PC-3 (cell line): ENCODE measurements at regions of chr5 and their contacts with region 1.

Region 1: DNA sequence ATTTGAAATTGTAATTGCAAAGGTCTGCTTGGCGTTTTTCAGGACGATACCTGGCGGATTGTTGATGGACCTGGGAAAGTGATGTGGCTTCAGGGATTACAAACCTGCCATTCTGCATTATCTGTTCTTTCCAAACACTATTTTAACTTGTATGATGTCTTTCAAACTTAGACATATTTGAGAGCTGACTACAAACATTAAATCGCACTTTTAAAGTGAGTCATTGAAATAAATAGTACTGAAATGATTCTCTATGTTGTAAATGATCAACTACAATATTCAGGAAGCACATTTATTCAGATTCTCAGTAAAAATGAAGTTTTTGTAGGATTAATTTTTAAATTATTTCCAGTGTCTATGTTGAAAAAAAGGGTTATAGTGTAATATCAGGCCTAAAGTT is 32.3 kb upstream of the TMEM171 start:
- DNase-seq: peak; percentile 27
- ATAC-seq: peak; percentile 18; the same call in 1 of the 2 replicates
- H3K4me3 ChIP-seq: no peak overlapping the region
- H3K27ac ChIP-seq: no peak overlapping the region
- H3K4me1 ChIP-seq: peaks cover 12% of the 10 kb centered on the region; the same call in 1 of the 2 replicates
- H3K27me3 ChIP-seq: no peaks in the 10 kb centered on the region
- CTCF ChIP-seq: no peak

Region 2: GRCh38 chr5:72920690-72921502 is 167.1 kb before region 1 on chr5:
- CTCF ChIA-PET with region 1: no interaction called
- POLR2A ChIA-PET with region 1: no interaction called
- intact Hi-C with region 1: loop called (anchors 2 kb)
- DNase-seq: peak; percentile 68
- ATAC-seq: peak; percentile 85
- H3K4me3 ChIP-seq: no peak overlapping the region
- H3K27ac ChIP-seq: no peak overlapping the region
- H3K4me1 ChIP-seq: no peaks in the 10 kb centered on the region
- H3K27me3 ChIP-seq: no peaks in the 10 kb centered on the region
- CTCF ChIP-seq: peak; percentile 73

Region 3: GRCh38 chr5:73066466-73066865 is 21.6 kb before region 1 on chr5:
- CTCF ChIA-PET with region 1: no interaction called
- POLR2A ChIA-PET with region 1: no interaction called
- intact Hi-C with region 1: no loop called
- DNase-seq: no peak
- ATAC-seq: no peak
- H3K4me3 ChIP-seq: no peak overlapping the region
- H3K27ac ChIP-seq: no peak overlapping the region
- H3K4me1 ChIP-seq: no peaks in the 10 kb centered on the region
- H3K27me3 ChIP-seq: no peaks in the 10 kb centered on the region
- CTCF ChIP-seq: no peak

Region 4: DNA sequence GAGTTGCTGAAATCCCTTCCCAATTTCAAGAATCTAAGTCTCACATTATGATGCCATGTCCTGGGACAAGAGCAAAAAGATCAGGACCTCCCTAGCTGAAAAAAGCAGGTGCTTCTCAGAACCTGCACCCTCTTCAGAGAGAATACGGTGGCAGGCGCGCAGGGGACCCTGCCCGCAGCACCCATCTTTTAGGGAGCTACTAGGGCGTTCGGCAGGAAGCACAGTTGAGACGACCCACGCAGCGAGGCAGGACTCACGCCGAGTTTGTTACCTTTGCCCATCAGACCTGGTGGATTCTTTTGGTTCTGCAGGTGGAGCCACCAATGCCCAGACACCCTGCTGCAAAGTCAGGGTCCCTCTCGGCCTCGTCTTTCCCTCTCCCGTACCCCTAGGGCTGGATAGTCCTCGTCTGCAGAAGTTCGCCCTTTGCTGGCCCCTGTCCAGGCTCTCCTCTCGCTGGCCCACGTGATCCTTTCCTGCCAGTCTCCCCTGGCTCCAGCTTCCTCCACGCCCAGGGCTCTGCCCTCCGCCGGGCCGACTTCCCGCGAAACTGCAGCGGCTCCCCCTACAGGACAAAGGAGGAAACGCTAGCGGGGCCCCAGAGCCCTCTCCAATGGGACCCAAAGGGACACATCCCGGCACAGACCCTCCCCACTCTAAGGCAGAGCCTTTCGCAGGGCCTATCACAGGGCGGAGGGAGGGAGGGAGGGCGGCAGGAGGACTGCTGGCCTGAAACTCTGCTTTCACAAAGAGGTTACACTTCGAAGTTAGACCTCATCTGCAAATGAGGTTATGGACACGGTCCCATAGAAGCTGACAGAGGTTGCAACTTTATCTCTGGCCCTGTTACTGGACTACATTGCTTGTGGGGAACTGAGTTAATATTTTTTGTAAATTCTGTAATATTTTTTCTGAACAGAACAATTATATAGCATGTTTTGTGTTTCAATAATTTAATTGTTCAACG is 113.8 kb after region 1 on chr5:
- CTCF ChIA-PET with region 1: interaction called, 7 read pairs
- POLR2A ChIA-PET with region 1: no interaction called
- intact Hi-C with region 1: loop called (anchors 1 kb)
- DNase-seq: peak; percentile 85
- ATAC-seq: peak; percentile 99
- H3K4me3 ChIP-seq: peak overlapping the region; percentile 45; the same call in 1 of the 2 replicates
- H3K27ac ChIP-seq: no peak overlapping the region
- H3K4me1 ChIP-seq: 0 out of 2 replicates have a peak, but pooled peaks cover 3% of the 10 kb centered on the region
- H3K27me3 ChIP-seq: no peaks in the 10 kb centered on the region
- CTCF ChIP-seq: peak; percentile 79

Region 5: GRCh38 chr5:73215891-73216610 is 128.0 kb after region 1 on chr5:
- CTCF ChIA-PET with region 1: interaction called, 3 read pairs
- POLR2A ChIA-PET with region 1: interaction called, 3 read pairs
- intact Hi-C with region 1: loop called (anchors 1 kb)
- DNase-seq: peak; percentile 77
- ATAC-seq: peak; percentile 94
- H3K4me3 ChIP-seq: peak overlapping the region; percentile 68
- H3K27ac ChIP-seq: peak overlapping the region; percentile 68
- H3K4me1 ChIP-seq: no peaks in the 10 kb centered on the region
- H3K27me3 ChIP-seq: no peaks in the 10 kb centered on the region
- CTCF ChIP-seq: peak; percentile 70

Region 6: GRCh38 chr5:73298772-73299630 is 211.0 kb after region 1 on chr5:
- CTCF ChIA-PET with region 1: no interaction called
- POLR2A ChIA-PET with region 1: no interaction called
- intact Hi-C with region 1: loop called (anchors 10 kb)
- DNase-seq: peak; percentile 52
- ATAC-seq: peak; percentile 88
- H3K4me3 ChIP-seq: peak overlapping the region; percentile 69
- H3K27ac ChIP-seq: no peak overlapping the region
- H3K4me1 ChIP-seq: peaks cover 12% of the 10 kb centered on the region
- H3K27me3 ChIP-seq: no peaks in the 10 kb centered on the region
- CTCF ChIP-seq: peak; percentile 44; the same call in 1 of the 2 replicates

Region 7: GRCh38 chr5:73448463-73449136 is 360.6 kb after region 1 on chr5 and contains the start of gene FOXD1:
- CTCF ChIA-PET with region 1: no interaction called
- POLR2A ChIA-PET with region 1: no interaction called
- intact Hi-C with region 1: loop called (anchors 2 kb)
- DNase-seq: peak; percentile 83
- ATAC-seq: peak; percentile 83
- H3K4me3 ChIP-seq: peak within 1 kb of the TSS; percentile 78
- H3K27ac ChIP-seq: peak within 1 kb of the TSS; percentile 40
- H3K4me1 ChIP-seq: peaks cover 12% of the 10 kb centered on the region
- H3K27me3 ChIP-seq: no peaks in the 10 kb centered on the region
- CTCF ChIP-seq: no peak
- total RNA-seq, gene FOXD1: 10.3 and 12.8 TPM in 2 replicates